Kidney (tissue), 22 donors: ENCODE measurements at regions of chr6 and their contacts with region 1.

Region 1: GRCh38 chr6:3247255-3248146 is 11.2 kb upstream of the PSMG4 start:
- DNase-seq: peak; percentile 84 to 91 (median 88)
- H3K4me3 ChIP-seq: peak overlapping the region; percentile 39 to 54 (median 50)
- H3K27ac ChIP-seq: no peak overlapping the region
- H3K4me1 ChIP-seq: peaks cover 0 to 4% (median 2%) of the 10 kb centered on the region in 3 donors
- H3K27me3 ChIP-seq: no peaks in the 10 kb centered on the region
- CTCF ChIP-seq: no peak

Region 2: GRCh38 chr6:2952557-2953095 is 294.9 kb before region 1 on chr6:
- intact Hi-C with region 1: no loop called
- DNase-seq: peak; percentile 88 to 94 (median 91)
- H3K4me3 ChIP-seq: peak overlapping the region in 2 of 3 donors; percentile 7 to 33
- H3K27ac ChIP-seq: peak overlapping the region; percentile 27 to 59
- H3K4me1 ChIP-seq: peaks cover 0 to 20% (median 10%) of the 10 kb centered on the region in 3 donors
- H3K27me3 ChIP-seq: no peaks in the 10 kb centered on the region
- CTCF ChIP-seq: peak; percentile 75

Region 3: GRCh38 chr6:3125815-3126214 is 121.7 kb before region 1 on chr6:
- intact Hi-C with region 1: loop called (anchors 10 kb)
- DNase-seq: no peak
- H3K4me3 ChIP-seq: no peak overlapping the region
- H3K27ac ChIP-seq: no peak overlapping the region
- H3K4me1 ChIP-seq: peaks cover 0 to 5% (median 0%) of the 10 kb centered on the region in 3 donors
- H3K27me3 ChIP-seq: no peaks in the 10 kb centered on the region
- CTCF ChIP-seq: no peak

Region 4: GRCh38 chr6:3162565-3163247 is 84.8 kb before region 1 on chr6:
- intact Hi-C with region 1: loop called (anchors 10 kb)
- DNase-seq: peak; percentile 84 to 92 (median 90)
- H3K4me3 ChIP-seq: peak overlapping the region; percentile 39 to 71 (median 64)
- H3K27ac ChIP-seq: peak overlapping the region; percentile 70 to 86
- H3K4me1 ChIP-seq: peaks cover 0 to 5% (median 0%) of the 10 kb centered on the region in 3 donors
- H3K27me3 ChIP-seq: peaks cover 2% of the 10 kb centered on the region
- CTCF ChIP-seq: no peak